Right ventricle myocardium inferior (tissue), 1 donor: ENCODE measurements at regions of chr11 and their contacts with region 1.

Region 1: GRCh38 chr11:112280268-112281126 is 19.8 kb upstream of the PLET1 start:
- DNase-seq: no peak
- ATAC-seq: peak; percentile 88

Region 2: DNA sequence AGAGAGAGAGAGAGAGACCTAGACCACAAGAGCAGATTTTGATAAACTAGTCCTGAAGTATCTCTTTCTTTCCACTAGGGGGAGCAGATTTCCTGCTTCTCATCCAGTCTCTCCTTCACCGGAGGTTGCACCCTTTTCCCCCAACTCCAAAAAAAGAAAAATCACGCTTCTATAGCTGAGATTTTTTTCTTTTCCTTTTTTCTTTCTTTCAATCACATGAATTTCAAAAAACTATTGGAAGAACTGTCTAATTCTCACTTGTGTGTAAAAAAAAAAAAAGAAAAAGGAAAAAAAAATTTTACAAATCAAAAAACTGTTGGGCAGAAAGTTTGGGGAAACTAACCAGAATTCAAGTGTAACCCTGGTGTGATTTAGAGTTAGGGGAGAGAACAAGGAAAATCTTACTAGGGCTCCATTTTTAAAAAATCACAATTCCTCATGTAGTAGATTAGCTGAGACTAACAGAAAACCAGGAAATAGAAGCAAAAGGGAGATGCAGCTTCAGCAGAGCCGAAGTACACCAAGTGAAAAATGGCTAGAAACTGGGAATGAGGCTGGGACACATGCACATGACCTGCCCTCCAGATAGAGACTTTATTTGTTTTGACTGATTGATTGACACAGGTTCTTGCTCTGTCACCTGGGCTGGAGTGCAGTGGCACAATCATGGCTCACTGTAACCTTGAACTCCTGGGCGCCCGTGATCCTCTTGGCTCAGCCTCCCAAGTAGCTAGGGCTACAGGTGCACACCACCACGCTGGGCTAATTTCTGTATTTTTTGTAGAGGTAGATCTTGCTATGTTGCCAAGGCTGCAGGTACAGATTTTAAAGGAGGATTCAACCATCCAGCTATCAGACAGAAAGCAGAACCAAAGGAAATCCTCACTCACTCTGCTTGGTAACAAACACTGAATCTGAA is 166.7 kb before region 1 on chr11:
- intact Hi-C with region 1: loop called (anchors 5 kb)
- DNase-seq: no peak
- ATAC-seq: no peak

Region 3: GRCh38 chr11:112156956-112157766 is 123.3 kb before region 1 on chr11:
- intact Hi-C with region 1: no loop called
- DNase-seq: no peak
- ATAC-seq: no peak

Region 4: GRCh38 chr11:112219476-112220232 is 60.8 kb before region 1 on chr11:
- intact Hi-C with region 1: loop called (anchors 1 kb)
- DNase-seq: no peak
- ATAC-seq: peak; percentile 86